ENCODE measurements at regions of chr1 and their contacts with region 1.

Region 1: GRCh38 chr1:183164963-183165362 is 21.1 kb upstream of the LAMC2 start:
- DNase-seq: peak; percentile 96
- H3K4me3 ChIP-seq: peak overlapping the region in 1 of 3 experiments; percentile 15
- H3K27ac ChIP-seq: peak overlapping the region; percentile 100
- H3K4me1 ChIP-seq: peaks cover 51% of the 10 kb centered on the region
- H3K27me3 ChIP-seq: no peaks in the 10 kb centered on the region
- CTCF ChIP-seq: no peak

Region 2: GRCh38 chr1:183180634-183181056 is 15.7 kb after region 1 on chr1:
- CTCF ChIA-PET with region 1: no interaction called
- dilution Hi-C with region 1: no loop called
- in situ Hi-C with region 1: no loop called
- intact Hi-C with region 1: loop called (anchors 1 kb)
- DNase-seq: peak; percentile 96
- H3K4me3 ChIP-seq: peak overlapping the region in 1 of 3 experiments; percentile 13
- H3K27ac ChIP-seq: peak overlapping the region; percentile 99
- H3K4me1 ChIP-seq: peaks cover 45% of the 10 kb centered on the region
- H3K27me3 ChIP-seq: no peaks in the 10 kb centered on the region
- CTCF ChIP-seq: no peak

Measured in mammary epithelial cell (primary cell).